Activated CD8-positive, alpha-beta T cell treated with anti-CD3 and anti-CD28 coated beads for 36 hours (primary cell): ENCODE measurements at regions of chr14 and their contacts with region 1.

Region 1: DNA sequence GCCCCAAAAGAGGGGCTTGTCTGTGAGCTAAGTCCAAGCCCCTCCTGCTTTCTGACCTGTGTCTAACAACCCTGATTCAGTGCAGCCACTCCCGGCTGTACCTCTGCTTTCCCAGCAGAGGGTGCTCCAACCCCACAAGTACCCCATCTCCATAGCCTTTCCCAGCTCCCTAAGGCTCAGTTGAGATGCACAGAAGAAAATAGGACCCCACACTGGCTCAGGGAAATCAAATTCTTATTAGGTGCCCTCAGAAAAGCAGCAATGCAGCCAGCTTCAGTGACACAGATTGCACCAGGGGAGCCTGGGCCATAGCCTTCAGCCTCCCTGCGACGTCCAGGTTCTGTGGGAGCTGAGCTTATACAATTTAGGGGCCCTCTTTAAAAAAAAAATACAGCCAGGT is 49.9 kb downstream of the LRRC74A start:
- DNase-seq: peak; percentile 57
- ATAC-seq: peak; percentile 90
- H3K4me3 Mint-ChIP-seq: no peak overlapping the region
- H3K27ac Mint-ChIP-seq: no peak overlapping the region
- H3K4me1 Mint-ChIP-seq: peaks cover 1% of the 10 kb centered on the region
- H3K27me3 Mint-ChIP-seq: peaks cover 3% of the 10 kb centered on the region
- CTCF ChIP-seq: peak; percentile 78

Region 2: GRCh38 chr14:76863724-76864407 is 12.2 kb before region 1 on chr14:
- CTCF ChIA-PET with region 1: interaction called, 14 read pairs
- POLR2A ChIA-PET with region 1: no interaction called
- intact Hi-C with region 1: no loop called
- DNase-seq: peak; percentile 50
- ATAC-seq: no peak
- H3K4me3 Mint-ChIP-seq: no peak overlapping the region
- H3K27ac Mint-ChIP-seq: no peak overlapping the region
- H3K4me1 Mint-ChIP-seq: peaks cover 23% of the 10 kb centered on the region
- H3K27me3 Mint-ChIP-seq: peaks cover 5% of the 10 kb centered on the region
- CTCF ChIP-seq: no peak

Region 3: GRCh38 chr14:76910371-76910890 is 34.4 kb after region 1 on chr14:
- CTCF ChIA-PET with region 1: interaction called, 34 read pairs
- POLR2A ChIA-PET with region 1: no interaction called
- intact Hi-C with region 1: loop called (anchors 5 kb)
- DNase-seq: no peak
- ATAC-seq: no peak
- H3K4me3 Mint-ChIP-seq: no peak overlapping the region
- H3K27ac Mint-ChIP-seq: no peak overlapping the region
- H3K4me1 Mint-ChIP-seq: peaks cover 15% of the 10 kb centered on the region
- H3K27me3 Mint-ChIP-seq: no peaks in the 10 kb centered on the region
- CTCF ChIP-seq: no peak

Region 4: GRCh38 chr14:76962303-76962660 is 86.2 kb after region 1 on chr14:
- CTCF ChIA-PET with region 1: interaction called, 12 read pairs
- POLR2A ChIA-PET with region 1: no interaction called
- intact Hi-C with region 1: no loop called
- DNase-seq: peak; percentile 14
- ATAC-seq: peak; percentile 4
- H3K4me3 Mint-ChIP-seq: peak overlapping the region; percentile 75
- H3K27ac Mint-ChIP-seq: peak overlapping the region; percentile 100
- H3K4me1 Mint-ChIP-seq: peaks cover 88% of the 10 kb centered on the region
- H3K27me3 Mint-ChIP-seq: peaks cover 2% of the 10 kb centered on the region
- CTCF ChIP-seq: no peak

Region 5: DNA sequence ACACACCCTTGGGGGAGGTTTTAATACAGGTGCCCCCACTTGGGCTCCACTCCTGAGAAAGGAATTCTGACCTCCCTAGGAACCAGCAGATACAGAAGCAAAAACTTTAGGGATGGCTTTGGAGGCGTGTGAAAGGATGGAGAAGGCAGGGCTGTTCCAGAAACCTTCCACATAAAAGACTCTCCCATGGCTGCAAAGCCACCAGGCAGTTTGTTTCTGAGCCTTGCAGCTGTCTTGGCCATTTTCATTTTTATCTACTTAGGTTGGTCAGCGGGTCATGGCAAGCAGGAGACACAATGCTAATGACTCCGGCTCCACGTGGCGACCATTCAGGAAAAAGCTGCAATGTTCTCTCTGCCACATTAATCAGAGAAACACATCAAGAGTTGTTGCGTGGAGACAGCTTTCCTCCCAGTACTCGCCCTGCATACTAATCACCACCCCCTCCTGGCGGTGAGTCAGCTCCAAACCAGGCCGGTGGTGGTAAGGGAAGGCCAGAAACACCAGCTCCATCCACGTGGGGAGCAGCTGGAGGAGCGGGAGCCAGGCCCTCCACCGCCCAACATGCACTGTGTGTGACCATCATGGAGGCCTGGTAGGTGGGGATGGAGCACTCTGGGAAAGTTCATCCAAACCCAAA is 183.3 kb after region 1 on chr14:
- CTCF ChIA-PET with region 1: interaction called, 133 read pairs
- POLR2A ChIA-PET with region 1: no interaction called
- intact Hi-C with region 1: loop called (anchors 5 kb)
- DNase-seq: no peak
- ATAC-seq: no peak
- H3K4me3 Mint-ChIP-seq: no peak overlapping the region
- H3K27ac Mint-ChIP-seq: no peak overlapping the region
- H3K4me1 Mint-ChIP-seq: no peaks in the 10 kb centered on the region
- H3K27me3 Mint-ChIP-seq: no peaks in the 10 kb centered on the region
- CTCF ChIP-seq: no peak

Region 6: GRCh38 chr14:77086017-77086736 is 210.1 kb after region 1 on chr14:
- CTCF ChIA-PET with region 1: interaction called, 111 read pairs
- POLR2A ChIA-PET with region 1: no interaction called
- intact Hi-C with region 1: no loop called
- DNase-seq: no peak
- ATAC-seq: peak; percentile 60
- H3K4me3 Mint-ChIP-seq: no peak overlapping the region
- H3K27ac Mint-ChIP-seq: no peak overlapping the region
- H3K4me1 Mint-ChIP-seq: peaks cover 5% of the 10 kb centered on the region
- H3K27me3 Mint-ChIP-seq: no peaks in the 10 kb centered on the region
- CTCF ChIP-seq: no peak

Region 7: GRCh38 chr14:77442196-77442595 is 566.1 kb after region 1 on chr14:
- CTCF ChIA-PET with region 1: no interaction called
- POLR2A ChIA-PET with region 1: no interaction called
- intact Hi-C with region 1: no loop called
- DNase-seq: no peak
- ATAC-seq: no peak
- H3K4me3 Mint-ChIP-seq: no peak overlapping the region
- H3K27ac Mint-ChIP-seq: no peak overlapping the region
- H3K4me1 Mint-ChIP-seq: no peaks in the 10 kb centered on the region
- H3K27me3 Mint-ChIP-seq: no peaks in the 10 kb centered on the region
- CTCF ChIP-seq: no peak